ENCODE measurements at regions of chr1 and their contacts with region 1.

Region 1: DNA sequence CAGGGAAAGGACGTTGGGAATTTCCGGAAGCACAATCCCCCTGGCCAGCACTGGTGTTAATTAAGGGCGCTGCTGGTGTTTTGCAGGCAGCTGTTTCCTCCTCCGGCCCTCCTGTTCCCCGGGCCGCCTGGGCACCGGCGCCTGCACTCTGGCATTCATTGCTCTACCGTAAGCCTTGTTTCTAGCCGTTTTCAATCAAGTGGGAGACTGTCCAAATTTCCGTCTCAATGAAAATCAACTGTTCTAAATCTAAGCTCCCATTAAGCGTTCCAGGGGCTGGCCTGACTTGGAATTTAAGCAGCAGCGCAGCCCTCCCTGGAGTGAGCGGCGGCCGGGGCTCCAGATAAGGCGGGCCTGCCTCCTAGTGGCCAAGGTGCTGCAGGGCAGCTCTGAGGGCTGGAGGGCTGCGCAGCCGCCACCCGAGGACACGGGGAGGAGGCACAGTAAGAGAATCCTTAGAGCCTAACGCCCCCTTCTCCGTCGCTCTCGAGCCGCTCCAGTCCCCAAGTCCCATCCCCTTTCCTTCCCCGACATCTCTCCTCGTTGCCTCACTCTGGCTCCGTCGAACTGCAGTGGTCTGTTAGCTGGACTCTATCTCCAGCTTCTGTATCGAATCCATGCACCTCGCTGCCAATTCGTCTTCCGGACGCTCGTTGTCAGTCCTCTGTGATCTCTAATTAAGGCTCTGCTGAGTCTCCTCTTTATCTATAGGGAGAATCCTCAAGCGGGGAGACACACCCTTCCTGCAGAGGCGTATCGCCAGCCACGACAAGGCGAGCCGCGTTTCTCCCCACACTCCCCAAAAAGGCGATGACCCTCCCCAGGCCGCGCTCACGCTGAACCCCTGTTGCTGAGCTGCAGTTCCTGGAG is 57.8 kb upstream of the LRRC8D start:
- DNase-seq: peak; percentile 91
- ATAC-seq: peak; percentile 100
- H3K4me3 Mint-ChIP-seq: peak overlapping the region; percentile 80
- H3K27ac Mint-ChIP-seq: peak overlapping the region; percentile 83
- H3K4me1 Mint-ChIP-seq: peaks cover 58% of the 10 kb centered on the region
- H3K27me3 Mint-ChIP-seq: no peaks in the 10 kb centered on the region

Region 2: GRCh38 chr1:89605692-89606091 is 157.3 kb before region 1 on chr1:
- CTCF ChIA-PET with region 1: interaction called, 28 read pairs
- DNase-seq: no peak
- ATAC-seq: no peak
- H3K4me3 Mint-ChIP-seq: no peak overlapping the region
- H3K27ac Mint-ChIP-seq: peak overlapping the region; percentile 98
- H3K4me1 Mint-ChIP-seq: peaks cover 90% of the 10 kb centered on the region
- H3K27me3 Mint-ChIP-seq: no peaks in the 10 kb centered on the region

Region 3: GRCh38 chr1:89652373-89652772 is 110.6 kb before region 1 on chr1:
- CTCF ChIA-PET with region 1: interaction called, 20 read pairs
- DNase-seq: no peak
- ATAC-seq: no peak
- H3K4me3 Mint-ChIP-seq: no peak overlapping the region
- H3K27ac Mint-ChIP-seq: peak overlapping the region; percentile 31
- H3K4me1 Mint-ChIP-seq: peaks cover 82% of the 10 kb centered on the region
- H3K27me3 Mint-ChIP-seq: no peaks in the 10 kb centered on the region

Region 4: GRCh38 chr1:89675677-89676076 is 87.3 kb before region 1 on chr1:
- CTCF ChIA-PET with region 1: interaction called, 24 read pairs
- DNase-seq: no peak
- ATAC-seq: peak; percentile 40
- H3K4me3 Mint-ChIP-seq: no peak overlapping the region
- H3K27ac Mint-ChIP-seq: peak overlapping the region; percentile 65
- H3K4me1 Mint-ChIP-seq: peaks cover 64% of the 10 kb centered on the region
- H3K27me3 Mint-ChIP-seq: no peaks in the 10 kb centered on the region

Region 5: DNA sequence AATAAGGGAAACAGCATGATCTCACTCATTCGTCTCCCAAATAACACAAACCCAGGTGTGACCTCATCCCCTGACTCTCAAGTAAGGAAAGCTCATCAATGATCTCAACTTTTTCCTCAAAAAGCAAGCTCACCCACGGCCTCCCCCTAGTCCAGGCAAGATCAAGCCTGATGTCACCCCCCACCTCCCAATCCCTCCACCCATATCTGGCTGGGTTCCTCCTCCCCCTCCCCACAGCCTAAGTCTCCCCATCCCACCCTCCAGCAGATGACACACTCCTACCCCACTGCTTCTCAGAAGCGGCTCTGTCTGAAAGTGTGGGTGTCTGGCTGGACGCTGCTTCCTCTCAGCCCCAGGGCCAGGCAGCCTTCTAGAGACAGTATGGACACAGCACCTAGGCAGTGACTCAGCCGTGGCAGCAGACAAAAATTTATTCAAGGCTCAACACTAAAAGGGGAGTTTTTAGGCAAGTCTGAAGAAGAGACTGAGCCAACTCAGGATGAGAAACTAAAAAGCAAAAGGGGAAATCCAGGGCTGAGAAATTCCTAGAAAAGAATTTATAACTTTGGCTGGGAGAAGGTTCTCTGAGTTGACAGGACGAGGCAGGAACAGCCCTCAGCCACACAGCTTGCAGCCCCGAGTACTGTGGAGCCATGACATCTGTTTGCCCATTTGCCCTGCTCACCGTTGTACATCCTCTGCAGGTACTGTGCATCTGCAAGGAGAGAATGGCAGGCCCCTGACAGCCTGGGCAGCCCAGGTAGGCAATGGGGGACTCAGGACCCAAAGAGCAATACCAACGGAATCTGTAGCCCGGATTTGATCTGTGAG is 23.8 kb before region 1 on chr1:
- CTCF ChIA-PET with region 1: interaction called, 16 read pairs
- DNase-seq: no peak
- ATAC-seq: peak; percentile 76
- H3K4me3 Mint-ChIP-seq: peak overlapping the region; percentile 48
- H3K27ac Mint-ChIP-seq: peak overlapping the region; percentile 83
- H3K4me1 Mint-ChIP-seq: peaks cover 39% of the 10 kb centered on the region
- H3K27me3 Mint-ChIP-seq: no peaks in the 10 kb centered on the region

Region 6: GRCh38 chr1:89994805-89995597 is 232.0 kb after region 1 on chr1 and contains the start of gene ZNF326:
- CTCF ChIA-PET with region 1: no interaction called
- DNase-seq: peak; percentile 96
- ATAC-seq: peak; percentile 98
- H3K4me3 Mint-ChIP-seq: peak within 1 kb of the TSS; percentile 93
- H3K27ac Mint-ChIP-seq: peak within 1 kb of the TSS; percentile 95
- H3K4me1 Mint-ChIP-seq: peaks cover 37% of the 10 kb centered on the region
- H3K27me3 Mint-ChIP-seq: peaks cover 15% of the 10 kb centered on the region
- total RNA-seq, gene ZNF326: 16.3 to 19.9 TPM

Measured in activated CD8-positive, alpha-beta memory T cell treated with anti-CD3 and anti-CD28 coated beads, Interleukin-2, amount 10 ng/mL, durations not matched to agents 7 days and 5 days (primary cell).